A673 (cell line): ENCODE measurements at regions of chr6 and their contacts with region 1.

Region 1: DNA sequence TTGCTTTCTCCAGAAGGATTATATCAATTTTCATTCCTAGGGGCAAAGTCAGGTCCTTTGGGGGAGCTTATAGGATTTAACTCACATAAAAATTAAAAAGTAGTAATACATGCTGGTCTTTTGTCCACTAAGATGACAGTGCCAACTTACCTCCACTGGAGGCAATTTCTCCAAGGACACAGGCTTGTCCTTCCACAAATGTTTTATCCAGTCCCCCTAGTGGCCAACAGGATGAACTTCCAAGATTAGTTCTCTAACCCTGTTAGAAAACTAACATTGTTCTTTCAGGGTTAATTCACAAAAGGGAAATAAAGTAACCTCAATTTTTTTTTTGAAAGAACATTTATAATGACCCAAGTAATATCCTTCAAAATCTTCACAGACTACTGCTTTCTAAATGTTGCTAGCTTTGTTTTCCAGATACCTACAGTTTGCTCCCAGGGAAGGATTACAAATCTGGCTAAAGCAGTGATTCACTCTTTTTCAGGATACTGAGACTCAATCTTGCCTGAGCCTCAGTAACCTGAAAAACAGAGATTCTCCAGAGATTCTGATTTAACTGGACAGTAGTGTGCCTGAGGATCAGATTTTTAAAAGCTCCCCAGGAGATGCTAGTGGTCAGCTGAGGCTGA is 31.7 kb upstream of the UBR2 start:
- DNase-seq: peak; percentile 72
- H3K4me3 ChIP-seq: no peak overlapping the region
- H3K27ac ChIP-seq: no peak overlapping the region
- H3K4me1 ChIP-seq: no peaks in the 10 kb centered on the region
- H3K27me3 ChIP-seq: no peaks in the 10 kb centered on the region
- CTCF ChIP-seq: peak; percentile 86

Region 2: DNA sequence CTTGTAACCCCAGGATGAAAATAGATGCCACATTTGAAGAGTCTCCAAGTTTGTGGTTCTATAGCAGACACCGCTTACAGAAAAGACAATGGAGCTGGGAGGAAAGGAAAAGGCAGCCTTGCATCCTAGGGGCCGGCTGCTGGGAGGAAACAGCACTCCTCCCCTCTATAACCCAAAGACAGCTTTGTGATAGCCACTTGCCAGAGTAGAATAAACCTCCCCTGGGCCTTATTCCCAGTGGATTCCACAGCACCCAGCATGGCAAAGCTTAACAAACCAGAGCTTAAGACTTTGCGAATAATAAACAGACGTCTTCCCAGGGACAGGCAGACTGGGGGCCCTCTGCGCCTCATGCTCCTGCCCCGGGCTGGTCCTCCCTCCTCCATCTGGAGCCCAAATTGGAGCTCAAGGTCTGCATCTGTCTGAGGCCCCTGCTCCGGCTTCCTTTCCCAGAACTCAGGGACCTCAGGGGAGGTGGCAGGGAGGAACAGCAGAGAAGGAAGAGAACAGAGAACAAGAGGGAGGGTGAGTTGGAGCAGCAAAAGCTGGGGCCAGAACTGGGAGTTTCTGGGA is 490.6 kb before region 1 on chr6:
- CTCF ChIA-PET with region 1: no interaction called
- POLR2A ChIA-PET with region 1: no interaction called
- intact Hi-C with region 1: no loop called
- DNase-seq: no peak
- H3K4me3 ChIP-seq: no peak overlapping the region
- H3K27ac ChIP-seq: no peak overlapping the region
- H3K4me1 ChIP-seq: peaks cover 20% of the 10 kb centered on the region
- H3K27me3 ChIP-seq: no peaks in the 10 kb centered on the region
- CTCF ChIP-seq: no peak

Region 3: GRCh38 chr6:42260972-42261371 is 271.2 kb before region 1 on chr6:
- CTCF ChIA-PET with region 1: no interaction called
- POLR2A ChIA-PET with region 1: no interaction called
- intact Hi-C with region 1: loop called (anchors 5 kb)
- DNase-seq: peak; percentile 66
- H3K4me3 ChIP-seq: peak overlapping the region; percentile 39
- H3K27ac ChIP-seq: no peak overlapping the region
- H3K4me1 ChIP-seq: peaks cover 18% of the 10 kb centered on the region
- H3K27me3 ChIP-seq: no peaks in the 10 kb centered on the region
- CTCF ChIP-seq: peak; percentile 73

Region 4: GRCh38 chr6:43150051-43150751 is 618.0 kb after region 1 on chr6:
- CTCF ChIA-PET with region 1: no interaction called
- POLR2A ChIA-PET with region 1: no interaction called
- intact Hi-C with region 1: no loop called
- DNase-seq: no peak
- H3K4me3 ChIP-seq: no peak overlapping the region
- H3K27ac ChIP-seq: no peak overlapping the region
- H3K4me1 ChIP-seq: no peaks in the 10 kb centered on the region
- H3K27me3 ChIP-seq: no peaks in the 10 kb centered on the region
- CTCF ChIP-seq: no peak